ENCODE measurements at regions of chr22 and their contacts with region 1.

Region 1: DNA sequence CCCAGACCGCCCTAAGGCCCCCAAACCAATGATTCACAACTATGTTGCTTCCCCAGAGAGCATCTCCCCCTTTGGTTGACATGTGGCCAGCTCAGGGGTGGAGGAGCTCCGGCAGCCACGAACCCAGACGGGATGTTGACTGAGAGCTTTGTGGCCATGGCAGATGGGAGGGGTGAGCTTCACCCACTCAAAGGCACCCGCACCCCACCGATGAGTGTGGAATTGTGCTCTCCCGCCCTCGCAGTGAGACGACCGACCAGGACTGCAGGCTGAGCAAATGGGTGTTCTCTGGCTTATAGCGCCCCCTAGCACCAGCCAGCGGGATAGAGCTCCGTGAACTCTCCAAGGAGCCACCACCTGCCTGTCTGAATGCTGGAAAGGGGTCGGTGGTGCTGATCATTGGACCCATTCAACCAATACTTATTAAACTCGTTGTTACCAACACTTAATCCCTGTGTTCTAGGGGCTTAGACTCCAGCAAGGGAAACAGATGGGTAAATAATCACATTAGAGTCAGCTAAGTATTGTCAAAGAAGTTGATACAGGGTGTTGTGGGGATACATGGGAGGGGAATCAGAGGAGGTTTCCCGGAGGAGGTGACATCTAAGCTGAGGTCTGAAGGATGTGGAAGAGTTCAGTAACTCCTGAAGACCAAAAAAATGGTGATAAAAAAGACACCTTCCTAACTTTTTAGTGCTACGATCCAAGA is 4.5 kb upstream of the TIMP3 start:
- DNase-seq: peak; percentile 83
- ATAC-seq: peak; percentile 55
- H3K4me3 ChIP-seq: no peak overlapping the region
- H3K27ac ChIP-seq: peak overlapping the region; percentile 9
- H3K4me1 ChIP-seq: peaks cover 10% of the 10 kb centered on the region
- H3K27me3 ChIP-seq: no peaks in the 10 kb centered on the region
- CTCF ChIP-seq: peak; percentile 95
- POLR2A ChIP-seq: 0 out of 2 replicates have a peak, but pooled peaks have one; percentile 52
- RAD21 ChIP-seq: peak; percentile 98

Region 2: DNA sequence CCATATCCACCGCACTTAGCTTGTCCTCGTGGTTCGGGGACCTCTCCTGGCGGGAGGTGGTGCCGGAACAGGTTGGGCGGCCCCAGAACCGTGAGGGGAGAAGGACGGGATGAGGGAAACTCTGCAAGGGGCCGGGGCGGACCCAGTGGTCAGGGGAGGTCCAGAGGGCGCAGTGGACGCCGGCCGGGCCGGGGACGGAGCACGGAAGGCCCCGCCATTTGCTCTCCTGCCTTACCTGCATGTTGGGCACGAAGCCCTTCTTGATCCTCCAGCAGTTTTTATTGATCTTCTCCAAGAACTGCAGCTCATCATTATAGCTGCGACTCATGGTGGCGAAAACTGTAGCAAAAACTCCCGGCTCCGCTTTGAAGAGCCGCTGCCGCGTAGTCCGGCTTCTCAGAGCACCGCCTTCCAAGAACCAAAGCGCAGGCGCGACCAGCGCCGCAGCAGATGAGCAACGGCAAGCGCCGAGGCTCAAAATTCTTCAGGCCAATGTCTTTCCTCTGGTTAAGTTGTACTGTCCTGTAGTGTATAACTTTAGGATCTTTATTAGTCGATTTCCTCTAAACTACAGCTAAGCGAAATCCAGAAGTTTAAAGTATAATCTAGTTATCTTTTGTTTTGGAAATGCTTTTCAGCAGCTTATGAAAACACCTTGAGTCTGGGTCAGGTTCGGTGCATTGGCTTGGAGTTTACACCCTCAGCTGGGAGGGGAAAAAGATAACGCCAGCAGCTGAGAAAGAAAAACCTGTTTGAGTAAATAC is 385.0 kb before region 1 on chr22 and contains the start of gene RTCB:
- CTCF ChIA-PET with region 1: interaction called, 3 read pairs
- POLR2A ChIA-PET with region 1: no interaction called
- dilution Hi-C with region 1: no loop called
- in situ Hi-C with region 1: no loop called
- intact Hi-C with region 1: loop called (anchors 10 kb)
- DNase-seq: peak; percentile 93
- ATAC-seq: peak; percentile 94
- H3K4me3 ChIP-seq: peak within 1 kb of the TSS; percentile 78
- H3K27ac ChIP-seq: peak within 1 kb of the TSS; percentile 57
- H3K4me1 ChIP-seq: peaks cover 2% of the 10 kb centered on the region; the same call in 1 of the 2 replicates
- H3K27me3 ChIP-seq: no peaks in the 10 kb centered on the region; the same call in none of the 2 replicates
- CTCF ChIP-seq: no peak
- POLR2A ChIP-seq: peak; percentile 48; the same call in 1 of the 2 replicates
- RAD21 ChIP-seq: no peak
- total RNA-seq, gene RTCB: 213 and 240 TPM in 2 replicates

Region 3: DNA sequence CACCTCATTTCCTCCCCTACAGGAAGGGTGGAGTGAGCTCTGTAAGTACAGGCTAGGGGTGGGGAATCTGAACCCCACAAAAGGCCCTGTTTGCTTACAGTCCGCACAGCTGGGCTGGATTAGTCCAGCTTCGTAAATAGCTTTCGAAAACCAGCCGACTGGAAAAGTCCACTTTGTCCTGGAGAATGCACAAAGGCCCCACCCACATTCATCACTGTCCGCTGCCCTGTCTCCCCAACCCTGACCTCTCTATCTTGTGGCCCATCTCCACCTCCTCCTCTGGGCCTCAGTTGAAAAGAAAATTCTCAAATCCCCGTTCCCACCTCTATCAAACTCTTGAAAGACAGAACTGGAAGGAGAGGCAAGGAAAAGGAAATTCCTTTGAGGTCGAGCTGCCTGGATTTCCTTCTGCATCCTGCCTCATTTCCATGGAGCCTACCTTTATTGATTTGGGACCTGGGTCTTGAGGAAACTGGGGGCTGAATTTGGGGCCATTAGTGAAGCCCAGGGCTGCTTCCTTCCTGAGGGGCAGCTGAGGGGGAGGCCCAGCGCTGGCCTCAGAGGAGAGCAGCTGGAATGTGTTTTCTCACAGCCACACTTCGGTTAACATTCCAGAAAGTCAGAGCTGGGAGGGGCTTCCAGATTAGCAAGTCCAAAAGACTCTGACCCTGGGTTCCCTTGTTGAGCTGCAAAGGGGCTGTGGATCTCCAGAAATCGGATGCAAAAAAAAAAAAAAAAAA is 174.8 kb before region 1 on chr22:
- CTCF ChIA-PET with region 1: interaction called, 18 read pairs
- POLR2A ChIA-PET with region 1: interaction called, 27 read pairs
- dilution Hi-C with region 1: no loop called
- in situ Hi-C with region 1: no loop called
- intact Hi-C with region 1: no loop called
- DNase-seq: peak; percentile 94
- ATAC-seq: peak; percentile 88
- H3K4me3 ChIP-seq: no peak overlapping the region
- H3K27ac ChIP-seq: peak overlapping the region; percentile 99
- H3K4me1 ChIP-seq: peaks cover 41% of the 10 kb centered on the region
- H3K27me3 ChIP-seq: no peaks in the 10 kb centered on the region
- CTCF ChIP-seq: no peak
- POLR2A ChIP-seq: no peak
- RAD21 ChIP-seq: no peak

Region 4: DNA sequence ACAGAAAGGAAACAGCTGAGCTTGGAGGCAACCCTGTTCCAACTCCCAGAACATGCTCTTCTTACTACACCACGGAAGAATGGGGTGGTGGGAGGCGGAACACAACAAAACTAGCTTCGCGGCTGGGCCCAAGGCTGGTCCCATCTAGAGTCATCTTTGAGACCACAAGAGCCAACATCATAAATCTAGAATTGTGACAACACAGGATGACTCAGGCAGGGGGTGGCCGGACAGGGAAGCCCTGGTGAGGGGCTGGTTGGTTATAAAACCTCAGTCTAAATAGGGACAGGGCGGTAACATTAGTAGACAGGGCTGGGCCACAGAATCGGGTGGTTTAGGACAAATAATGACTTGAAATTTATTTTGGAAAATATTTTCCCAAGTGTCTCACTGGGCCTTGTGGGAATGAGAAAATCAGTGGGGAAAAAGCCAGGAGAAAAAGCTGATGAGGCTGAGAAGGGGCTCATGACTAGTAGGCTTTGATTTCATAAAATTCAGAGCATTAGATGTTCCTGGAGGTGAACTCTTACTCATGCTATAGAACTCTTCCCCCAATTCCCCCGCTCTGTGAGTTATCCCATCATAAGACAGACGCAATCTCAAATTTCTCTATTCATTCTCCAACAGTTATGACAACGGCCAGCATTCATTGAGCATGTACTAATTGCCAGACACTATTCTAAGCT is 147.4 kb before region 1 on chr22:
- CTCF ChIA-PET with region 1: no interaction called
- POLR2A ChIA-PET with region 1: no interaction called
- dilution Hi-C with region 1: no loop called
- in situ Hi-C with region 1: loop called (anchors 5 kb)
- intact Hi-C with region 1: no loop called
- DNase-seq: peak; percentile 81
- ATAC-seq: peak; percentile 59
- H3K4me3 ChIP-seq: no peak overlapping the region
- H3K27ac ChIP-seq: peak overlapping the region; percentile 62
- H3K4me1 ChIP-seq: peaks cover 20% of the 10 kb centered on the region
- H3K27me3 ChIP-seq: no peaks in the 10 kb centered on the region; the same call in 1 of the 2 replicates
- CTCF ChIP-seq: no peak
- POLR2A ChIP-seq: no peak
- RAD21 ChIP-seq: peak; percentile 18; the same call in 1 of the 2 replicates

Region 5: DNA sequence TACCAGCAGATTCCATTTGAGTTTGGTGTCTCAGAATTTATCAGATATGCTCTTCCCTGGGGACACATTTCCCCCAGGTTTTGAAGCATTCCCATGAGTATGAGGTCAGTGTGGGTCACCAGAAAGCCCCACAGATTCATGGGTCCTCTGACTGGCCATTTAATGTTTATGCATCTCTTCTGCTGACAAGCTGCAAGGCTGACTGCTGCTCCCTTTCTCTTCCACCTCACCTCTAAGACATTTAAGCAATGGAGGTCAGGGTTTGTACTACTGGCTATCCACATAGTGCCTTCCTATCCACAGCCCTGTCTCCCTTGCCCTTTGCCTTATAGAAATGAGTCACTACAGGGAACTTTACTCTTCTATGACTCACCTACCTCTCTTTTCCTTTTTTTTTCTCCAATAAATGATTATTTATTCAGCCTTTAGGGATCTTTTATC is 101.5 kb before region 1 on chr22:
- CTCF ChIA-PET with region 1: interaction called, 13 read pairs
- POLR2A ChIA-PET with region 1: interaction called, 3 read pairs
- dilution Hi-C with region 1: no loop called
- in situ Hi-C with region 1: no loop called
- intact Hi-C with region 1: no loop called
- DNase-seq: peak; percentile 95
- ATAC-seq: peak; percentile 89
- H3K4me3 ChIP-seq: no peak overlapping the region
- H3K27ac ChIP-seq: peak overlapping the region; percentile 6; the same call in 1 of the 2 replicates
- H3K4me1 ChIP-seq: peaks cover 18% of the 10 kb centered on the region
- H3K27me3 ChIP-seq: no peaks in the 10 kb centered on the region
- CTCF ChIP-seq: no peak
- POLR2A ChIP-seq: no peak
- RAD21 ChIP-seq: no peak; the same call in 1 of the 2 replicates

Region 6: GRCh38 chr22:33083212-33083611 is 286.2 kb after region 1 on chr22:
- CTCF ChIA-PET with region 1: no interaction called
- POLR2A ChIA-PET with region 1: no interaction called
- dilution Hi-C with region 1: no loop called
- in situ Hi-C with region 1: no loop called
- intact Hi-C with region 1: no loop called
- DNase-seq: no peak
- ATAC-seq: no peak
- H3K4me3 ChIP-seq: no peak overlapping the region
- H3K27ac ChIP-seq: no peak overlapping the region
- H3K4me1 ChIP-seq: no peaks in the 10 kb centered on the region
- H3K27me3 ChIP-seq: no peaks in the 10 kb centered on the region
- CTCF ChIP-seq: no peak
- POLR2A ChIP-seq: no peak
- RAD21 ChIP-seq: no peak

Region 7: DNA sequence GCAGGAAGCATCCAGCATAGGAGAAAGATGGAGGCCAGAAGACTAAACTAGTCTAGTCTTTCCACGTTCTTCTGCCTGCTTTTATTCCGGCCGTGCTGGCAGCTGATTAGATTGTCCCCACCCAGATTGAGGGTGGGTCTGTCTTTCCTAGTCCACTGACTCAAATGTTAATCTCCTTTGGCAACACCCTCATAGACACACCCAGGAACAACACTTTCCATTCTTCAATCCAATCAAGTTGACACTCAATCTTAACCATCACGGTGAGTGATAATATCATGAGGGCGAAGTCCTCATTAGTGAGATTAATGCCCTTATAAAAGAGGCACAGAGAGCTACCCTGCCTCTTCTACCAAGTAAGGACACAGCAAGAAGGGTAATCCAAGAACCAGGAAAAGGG is 699.1 kb after region 1 on chr22:
- CTCF ChIA-PET with region 1: no interaction called
- POLR2A ChIA-PET with region 1: no interaction called
- dilution Hi-C with region 1: no loop called
- in situ Hi-C with region 1: no loop called
- intact Hi-C with region 1: no loop called
- DNase-seq: no peak
- ATAC-seq: no peak
- H3K4me3 ChIP-seq: no peak overlapping the region
- H3K27ac ChIP-seq: no peak overlapping the region
- H3K4me1 ChIP-seq: peaks cover 2% of the 10 kb centered on the region; the same call in 1 of the 2 replicates
- H3K27me3 ChIP-seq: no peaks in the 10 kb centered on the region
- CTCF ChIP-seq: no peak
- POLR2A ChIP-seq: no peak
- RAD21 ChIP-seq: no peak